Activated T-helper 2 cell treated with anti-CD3 and anti-CD28 coated beads, Interferon-gamma antibody, Interleukin-2, Interleukin-4, amounts not matched to agents 10 μg/mL and 5 μg/mL and 100 μg/mL, durations not matched to agents 14 hours and 24 hours and 36 hours (primary cell): ENCODE measurements at regions of chr1 and their contacts with region 1.

Region 1: DNA sequence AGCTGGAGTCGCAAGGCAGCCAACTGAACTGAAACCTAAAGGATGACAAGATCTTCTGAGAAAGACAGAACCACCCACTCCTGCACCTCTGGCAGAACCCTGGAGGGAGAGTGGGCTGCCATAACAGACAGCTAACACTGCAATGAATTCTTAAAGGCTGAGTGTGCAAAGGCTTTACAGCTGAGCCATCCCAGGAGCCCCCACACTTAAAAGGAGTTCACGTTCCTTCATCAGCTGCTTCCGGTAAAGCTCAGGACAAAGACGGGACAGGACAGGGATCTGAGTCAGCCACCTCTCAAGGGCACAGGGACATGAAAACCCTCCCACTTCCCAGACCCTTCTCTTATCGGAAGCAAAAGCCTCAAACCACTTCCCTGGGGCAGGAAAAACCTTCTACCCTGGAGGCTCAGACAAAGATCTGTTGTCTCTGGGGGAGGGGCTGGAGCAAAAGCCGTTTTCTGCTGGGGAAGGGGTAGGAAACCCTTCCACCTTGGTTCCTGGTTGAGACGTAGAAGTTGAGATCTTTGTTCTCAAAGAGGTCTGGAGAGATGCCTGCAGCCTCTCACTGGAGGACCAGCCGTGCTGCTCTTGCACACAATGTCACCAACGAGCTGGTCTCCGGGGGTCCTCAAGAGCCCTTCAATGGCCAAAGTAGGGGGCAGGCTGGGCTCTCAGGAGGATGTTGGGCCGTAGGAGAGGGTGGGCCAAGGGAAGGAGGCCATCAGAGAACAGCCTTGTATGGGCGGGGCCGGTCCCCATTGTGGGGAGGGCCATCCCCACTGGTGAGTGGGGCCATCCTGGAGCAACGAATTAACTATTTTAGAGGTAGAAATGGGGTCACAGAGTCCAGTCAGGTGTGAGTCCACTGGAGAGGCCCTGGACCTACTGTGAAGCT is 452.4 kb downstream of the PTPRU start:
- DNase-seq: no peak
- H3K4me3 Mint-ChIP-seq: no peak overlapping the region
- H3K27ac Mint-ChIP-seq: peak overlapping the region; percentile 60
- H3K4me1 Mint-ChIP-seq: peaks cover 22% of the 10 kb centered on the region
- H3K27me3 Mint-ChIP-seq: peaks cover 16% of the 10 kb centered on the region

Region 2: DNA sequence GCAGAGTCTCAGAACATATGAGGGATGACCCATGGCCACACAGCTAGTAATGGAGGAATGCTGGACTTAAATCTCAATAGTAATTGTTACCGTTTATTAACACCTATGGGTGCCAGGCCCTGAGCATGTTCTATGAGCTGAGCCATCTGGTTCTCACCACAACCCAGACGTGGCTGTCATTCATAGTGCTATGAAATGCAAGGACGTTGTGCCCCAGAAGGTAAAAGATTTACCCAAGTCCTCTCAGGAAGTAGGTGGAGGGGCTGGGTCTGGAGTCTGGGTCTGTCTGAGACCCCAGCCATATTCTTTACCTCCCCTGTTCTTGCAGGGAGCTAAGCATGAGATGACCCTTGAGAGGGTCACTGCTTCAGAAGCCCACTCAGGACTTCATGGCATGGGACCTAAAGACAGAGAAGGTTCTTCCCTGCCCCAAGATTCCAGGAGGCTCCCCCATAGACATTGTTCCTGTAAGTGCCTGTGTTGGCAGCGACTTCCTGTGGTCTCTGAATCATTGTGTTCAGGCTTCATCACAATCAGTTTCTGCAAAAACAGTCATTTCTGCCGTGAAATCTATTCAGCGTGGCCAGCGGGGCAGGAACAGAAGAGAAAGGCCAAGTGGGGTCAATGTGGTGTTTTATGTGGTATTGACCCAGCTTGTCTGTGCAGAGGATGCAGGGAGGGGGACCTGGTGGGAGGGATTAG is 23.0 kb after region 1 on chr1:
- intact Hi-C with region 1: loop called (anchors 1 kb)
- DNase-seq: peak; percentile 25
- H3K4me3 Mint-ChIP-seq: no peak overlapping the region
- H3K27ac Mint-ChIP-seq: peak overlapping the region; percentile 66
- H3K4me1 Mint-ChIP-seq: peaks cover 50% of the 10 kb centered on the region
- H3K27me3 Mint-ChIP-seq: no peaks in the 10 kb centered on the region